ENCODE measurements at regions of chr17 and their contacts with region 1.

Region 1: DNA sequence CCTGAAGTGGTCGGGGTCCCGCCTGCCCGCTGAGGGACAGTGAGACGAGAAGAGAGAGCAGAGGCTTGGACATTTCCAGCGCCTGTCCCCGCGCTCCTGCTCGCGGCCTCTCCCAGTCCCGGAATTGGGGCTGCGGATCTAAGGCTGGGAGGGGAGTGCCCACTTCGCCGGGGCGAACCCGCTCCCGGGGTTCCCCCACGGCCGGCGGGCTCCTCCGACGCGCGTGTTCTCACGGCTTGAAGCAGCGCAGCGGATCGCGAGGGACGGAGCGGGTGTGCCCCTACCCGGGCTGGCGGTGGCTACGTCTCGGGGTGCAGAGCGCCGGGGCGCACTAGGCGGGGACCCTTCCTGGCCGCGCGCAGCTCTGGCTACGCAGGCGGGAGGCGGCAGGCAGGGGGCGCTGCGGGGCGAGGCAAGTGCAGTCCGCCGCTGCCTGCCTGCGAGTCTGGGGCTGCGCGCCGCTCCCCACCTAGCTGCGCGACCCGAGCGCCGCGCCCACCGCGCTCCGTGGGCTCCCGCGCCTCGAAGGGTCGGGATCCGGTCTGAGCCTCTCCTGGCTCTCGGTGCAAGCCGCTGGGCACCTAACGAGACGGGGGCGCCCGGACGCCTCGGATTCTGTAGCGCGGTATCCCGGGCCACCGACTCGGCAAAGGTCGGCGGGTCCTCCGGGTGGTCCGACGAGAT is 1.2 kb downstream of the NGFR start:
- DNase-seq: peak in 1 of 2 experiments; percentile 63
- H3K4me3 ChIP-seq: no peak overlapping the region
- H3K27ac ChIP-seq: no peak overlapping the region
- H3K4me1 ChIP-seq: no peaks in the 10 kb centered on the region
- H3K27me3 ChIP-seq: peaks cover 53% of the 10 kb centered on the region
- CTCF ChIP-seq: 0 out of 2 replicates have a peak, but pooled peaks have one; percentile 24

Region 2: GRCh38 chr17:49482144-49482817 is 14.0 kb before region 1 on chr17:
- CTCF ChIA-PET with region 1: no interaction called
- POLR2A ChIA-PET with region 1: no interaction called
- intact Hi-C with region 1: no loop called
- DNase-seq: no peak
- H3K4me3 ChIP-seq: no peak overlapping the region
- H3K27ac ChIP-seq: no peak overlapping the region
- H3K4me1 ChIP-seq: no peaks in the 10 kb centered on the region
- H3K27me3 ChIP-seq: peaks cover 83% of the 10 kb centered on the region
- CTCF ChIP-seq: no peak

Region 3: GRCh38 chr17:49548506-49549310 is 52.4 kb after region 1 on chr17:
- CTCF ChIA-PET with region 1: no interaction called
- POLR2A ChIA-PET with region 1: no interaction called
- intact Hi-C with region 1: loop called (anchors 2 kb)
- DNase-seq: peak in 1 of 2 experiments; percentile 53
- H3K4me3 ChIP-seq: no peak overlapping the region
- H3K27ac ChIP-seq: no peak overlapping the region
- H3K4me1 ChIP-seq: no peaks in the 10 kb centered on the region
- H3K27me3 ChIP-seq: peaks cover 10% of the 10 kb centered on the region; the same call in 1 of the 2 replicates
- CTCF ChIP-seq: peak; percentile 79

Measured in PC-9 (cell line).